Activated T-helper 2 cell treated with anti-CD3 and anti-CD28 coated beads, Interferon-gamma antibody, Interleukin-2, Interleukin-4, amounts not matched to agents 10 μg/mL and 5 μg/mL and 100 μg/mL, durations not matched to agents 14 hours and 24 hours and 36 hours (primary cell): ENCODE measurements at regions of chr14 and their contacts with region 1.

Region 1: DNA sequence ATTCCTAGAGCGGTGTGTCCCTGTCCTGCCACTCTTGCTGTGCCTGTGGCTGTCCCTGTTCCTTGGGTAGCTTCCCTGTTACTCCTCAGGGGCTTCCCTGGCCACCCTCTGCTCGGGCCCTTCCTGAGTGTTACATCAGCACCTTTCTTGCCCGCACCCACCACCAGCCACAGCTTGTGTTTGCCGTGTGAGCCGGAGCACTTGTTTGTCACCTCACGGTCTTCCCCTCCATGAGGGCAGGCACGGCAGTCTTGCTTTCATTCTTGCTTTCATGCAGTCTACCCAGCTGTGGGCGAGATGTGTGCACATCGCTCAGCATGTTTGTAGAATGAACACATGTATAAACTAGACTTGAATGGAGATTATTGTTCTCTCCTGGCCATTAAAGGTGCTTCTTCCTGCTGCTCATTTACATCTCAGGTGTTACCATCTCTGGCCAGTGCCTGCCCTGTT is 42.0 kb downstream of the TRAF3 start:
- DNase-seq: peak; percentile 50
- H3K4me3 Mint-ChIP-seq: peak overlapping the region; percentile 59
- H3K27ac Mint-ChIP-seq: peak overlapping the region; percentile 88
- H3K4me1 Mint-ChIP-seq: peaks cover 65% of the 10 kb centered on the region
- H3K27me3 Mint-ChIP-seq: no peaks in the 10 kb centered on the region

Region 2: DNA sequence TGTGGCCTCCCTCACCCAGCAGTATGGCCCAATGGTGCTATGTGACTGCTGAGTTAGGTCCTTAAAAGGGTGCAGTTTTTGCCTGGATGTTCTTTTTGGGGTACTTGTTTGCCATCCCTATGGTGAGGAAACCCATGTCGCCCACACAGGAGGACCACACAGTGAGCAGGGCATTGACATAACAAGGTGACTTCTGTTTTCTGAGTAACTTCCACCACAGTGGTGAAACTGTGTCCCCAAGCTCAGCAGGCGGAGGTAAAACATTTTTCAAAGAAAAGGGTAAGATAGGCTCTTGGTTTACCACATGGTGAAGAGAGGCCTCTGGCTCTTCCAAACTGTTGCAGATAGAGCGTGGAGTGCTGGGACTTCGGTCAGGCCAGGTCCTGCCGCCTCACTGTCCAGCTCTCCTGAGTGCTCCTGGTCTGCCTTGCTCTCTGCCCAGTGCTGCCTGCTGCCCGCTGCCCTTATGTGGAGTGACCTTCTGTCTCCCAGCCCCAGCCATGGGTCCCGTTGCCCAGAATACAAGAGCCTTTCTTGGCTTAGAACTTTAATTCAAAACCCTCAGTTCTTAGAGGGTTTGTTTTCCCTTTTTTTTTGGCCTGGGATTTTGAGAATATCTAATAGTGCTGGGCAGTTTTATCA is 12.1 kb after region 1 on chr14:
- intact Hi-C with region 1: loop called (anchors 1 kb)
- DNase-seq: no peak
- H3K4me3 Mint-ChIP-seq: peak overlapping the region; percentile 31
- H3K27ac Mint-ChIP-seq: peak overlapping the region; percentile 85
- H3K4me1 Mint-ChIP-seq: peaks cover 50% of the 10 kb centered on the region
- H3K27me3 Mint-ChIP-seq: no peaks in the 10 kb centered on the region

Region 3: GRCh38 chr14:102882226-102882906 is 63.2 kb after region 1 on chr14:
- intact Hi-C with region 1: loop called (anchors 1 kb)
- DNase-seq: no peak
- H3K4me3 Mint-ChIP-seq: no peak overlapping the region
- H3K27ac Mint-ChIP-seq: peak overlapping the region; percentile 20
- H3K4me1 Mint-ChIP-seq: peaks cover 16% of the 10 kb centered on the region
- H3K27me3 Mint-ChIP-seq: no peaks in the 10 kb centered on the region